ENCODE measurements at regions of chr2 and their contacts with region 1.

Region 1: DNA sequence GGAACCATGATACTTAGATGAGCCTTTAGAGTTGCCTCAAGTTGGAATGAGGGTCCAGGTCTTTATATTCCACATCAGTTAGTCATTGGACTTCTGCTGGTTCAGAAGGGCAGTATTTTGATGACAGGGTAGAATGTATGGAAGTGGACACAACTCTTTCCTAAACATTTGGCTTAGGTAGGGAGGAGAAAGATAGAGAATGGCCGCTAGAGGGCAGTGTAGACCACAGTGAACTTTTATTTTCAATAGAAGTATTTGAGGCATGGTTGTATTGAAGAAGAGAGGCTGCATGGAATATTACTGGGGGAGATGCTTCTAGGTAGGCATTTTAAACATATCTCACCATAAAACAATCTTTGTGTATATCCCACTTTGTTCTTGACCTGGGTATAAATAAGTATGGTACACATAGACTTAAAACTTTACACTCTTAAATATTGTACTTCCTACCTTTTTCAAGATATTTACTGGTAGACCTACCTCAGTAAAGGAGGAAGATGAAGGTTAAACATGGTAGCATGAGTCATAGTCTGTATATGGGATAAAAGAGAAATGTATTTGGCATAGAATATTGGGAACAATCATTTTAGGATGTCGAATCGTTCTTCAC is 497.6 kb upstream of the FAM98A start:
- DNase-seq: peak; percentile 79
- H3K4me3 ChIP-seq: no peak overlapping the region
- H3K27ac ChIP-seq: no peak overlapping the region
- H3K4me1 ChIP-seq: no peaks in the 10 kb centered on the region
- H3K27me3 ChIP-seq: no peaks in the 10 kb centered on the region
- CTCF ChIP-seq: peak; percentile 81

Region 2: GRCh38 chr2:33673937-33674336 is 422.7 kb before region 1 on chr2:
- CTCF ChIA-PET with region 1: no interaction called
- POLR2A ChIA-PET with region 1: no interaction called
- intact Hi-C with region 1: loop called (anchors 5 kb)
- DNase-seq: peak; percentile 36
- H3K4me3 ChIP-seq: no peak overlapping the region
- H3K27ac ChIP-seq: no peak overlapping the region
- H3K4me1 ChIP-seq: peaks cover 9% of the 10 kb centered on the region
- H3K27me3 ChIP-seq: no peaks in the 10 kb centered on the region
- CTCF ChIP-seq: peak; percentile 65

Region 3: DNA sequence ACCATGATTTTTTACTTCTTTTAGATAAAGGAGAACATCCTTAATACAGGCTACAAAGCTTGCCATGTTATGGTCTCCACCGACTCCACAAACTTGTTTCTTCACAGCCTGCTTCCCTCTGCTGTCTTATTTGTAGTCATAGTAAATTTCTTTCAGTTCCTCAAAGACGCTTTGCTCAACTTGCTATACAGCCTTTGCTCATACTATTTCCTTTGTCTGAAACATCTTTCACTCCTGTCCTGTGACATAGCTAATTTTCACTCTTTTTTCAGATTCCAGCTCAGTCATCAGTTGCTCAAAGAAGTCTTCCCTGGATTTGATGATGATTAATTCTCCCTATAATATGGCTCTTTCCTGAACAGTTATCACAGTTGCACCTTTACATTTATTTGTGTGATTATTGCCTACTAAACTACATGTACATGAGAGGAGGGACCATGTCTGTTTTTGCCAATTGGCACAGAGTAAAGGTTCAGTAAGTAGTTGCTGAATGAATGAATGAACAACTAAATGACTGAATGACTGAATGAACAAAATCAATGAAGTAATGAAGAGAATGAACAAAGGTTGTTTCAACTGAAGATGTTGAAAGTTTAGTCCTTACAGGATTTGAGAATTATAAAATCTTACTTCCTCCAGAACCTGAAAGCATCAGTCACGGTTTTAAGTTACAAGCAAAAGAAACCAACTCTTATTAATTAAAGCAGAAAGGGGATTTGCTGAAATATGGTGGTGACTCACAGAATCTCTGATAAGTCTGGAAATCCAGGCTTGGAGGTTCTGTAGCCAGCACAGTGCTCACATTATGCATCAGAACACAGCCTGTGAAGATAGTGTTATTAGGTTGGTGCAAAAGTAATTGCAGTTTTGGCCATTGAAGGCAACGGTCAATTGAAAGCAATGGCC is 311.2 kb before region 1 on chr2:
- CTCF ChIA-PET with region 1: no interaction called
- POLR2A ChIA-PET with region 1: no interaction called
- intact Hi-C with region 1: loop called (anchors 10 kb)
- DNase-seq: peak; percentile 26
- H3K4me3 ChIP-seq: no peak overlapping the region
- H3K27ac ChIP-seq: no peak overlapping the region
- H3K4me1 ChIP-seq: peaks cover 6% of the 10 kb centered on the region
- H3K27me3 ChIP-seq: no peaks in the 10 kb centered on the region
- CTCF ChIP-seq: no peak

Region 4: GRCh38 chr2:34353509-34354113 is 256.9 kb after region 1 on chr2:
- CTCF ChIA-PET with region 1: no interaction called
- POLR2A ChIA-PET with region 1: no interaction called
- intact Hi-C with region 1: loop called (anchors 5 kb)
- DNase-seq: no peak
- H3K4me3 ChIP-seq: no peak overlapping the region
- H3K27ac ChIP-seq: no peak overlapping the region
- H3K4me1 ChIP-seq: no peaks in the 10 kb centered on the region
- H3K27me3 ChIP-seq: no peaks in the 10 kb centered on the region
- CTCF ChIP-seq: no peak; the same call in 1 of the 2 replicates

Region 5: GRCh38 chr2:34738691-34739090 is 642.0 kb after region 1 on chr2:
- CTCF ChIA-PET with region 1: no interaction called
- POLR2A ChIA-PET with region 1: no interaction called
- intact Hi-C with region 1: loop called (anchors 5 kb)
- DNase-seq: peak; percentile 5
- H3K4me3 ChIP-seq: no peak overlapping the region
- H3K27ac ChIP-seq: no peak overlapping the region
- H3K4me1 ChIP-seq: no peaks in the 10 kb centered on the region
- H3K27me3 ChIP-seq: no peaks in the 10 kb centered on the region
- CTCF ChIP-seq: peak; percentile 63

Measured in A673 (cell line).